ENCODE measurements at regions of chr22 and their contacts with region 1.

Region 1: GRCh38 chr22:42437488-42438292 is 5.5 kb upstream of the NFAM1 start:
- DNase-seq: peak; percentile 84 to 96 (median 87)
- H3K4me3 ChIP-seq: peak overlapping the region; percentile 30 to 66 (median 46)
- H3K27ac ChIP-seq: peak overlapping the region; percentile 90 to 91
- H3K4me1 ChIP-seq: peaks cover 0 to 15% (median 0%) of the 10 kb centered on the region in 3 donors
- H3K27me3 ChIP-seq: no peaks in the 10 kb centered on the region
- CTCF ChIP-seq: peak; percentile 98

Region 2: GRCh38 chr22:42169055-42169469 is 268.6 kb before region 1 on chr22:
- intact Hi-C with region 1: loop called (anchors 10 kb)
- DNase-seq: peak in 4 of 5 donors; percentile 89 to 90 (median 89)
- H3K4me3 ChIP-seq: no peak overlapping the region
- H3K27ac ChIP-seq: no peak overlapping the region
- H3K4me1 ChIP-seq: peaks cover 6 to 29% (median 28%) of the 10 kb centered on the region in 3 donors
- H3K27me3 ChIP-seq: no peaks in the 10 kb centered on the region
- CTCF ChIP-seq: peak; percentile 99

Region 3: GRCh38 chr22:42635531-42635930 is 197.8 kb after region 1 on chr22:
- intact Hi-C with region 1: no loop called
- DNase-seq: no peak
- H3K4me3 ChIP-seq: no peak overlapping the region
- H3K27ac ChIP-seq: no peak overlapping the region
- H3K4me1 ChIP-seq: peaks cover 0 to 7% (median 2%) of the 10 kb centered on the region in 3 donors
- H3K27me3 ChIP-seq: no peaks in the 10 kb centered on the region
- CTCF ChIP-seq: no peak

Measured in kidney (tissue), 22 donors.